Adrenal gland (tissue), 19 donors: ENCODE measurements at regions of chr3 and their contacts with region 1.

Region 1: DNA sequence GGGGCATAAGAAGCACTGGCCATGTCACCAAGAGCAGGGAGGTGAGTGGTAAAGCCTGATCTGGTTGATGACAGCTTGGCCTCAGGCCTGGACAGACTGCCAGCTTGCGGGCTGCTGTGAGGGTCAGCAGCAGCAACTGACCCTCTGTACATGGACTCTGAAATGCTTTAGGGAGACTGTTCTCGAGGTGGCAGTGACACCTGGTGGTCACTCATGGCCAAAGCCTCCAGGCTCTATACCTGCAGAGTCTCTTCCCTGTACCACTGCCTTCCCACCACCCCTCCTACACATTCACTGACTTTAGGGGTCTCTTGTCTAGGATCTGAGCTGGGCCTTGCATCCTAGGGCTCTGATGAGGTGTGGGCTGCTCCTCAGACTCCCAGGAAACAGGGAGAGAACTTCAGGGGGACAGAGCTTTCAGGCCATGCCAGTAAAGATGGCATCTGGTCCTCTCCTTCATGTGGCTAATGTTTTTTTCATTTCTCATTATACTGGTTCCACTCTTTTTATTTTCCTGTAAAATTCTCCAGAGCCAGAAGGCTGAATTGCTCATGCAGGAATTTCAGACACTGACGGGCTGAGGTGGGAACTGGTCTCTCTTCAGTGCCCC is 17.2 kb upstream of the TIMP4 start:
- DNase-seq: peak; percentile 55 to 86 (median 65)
- H3K4me3 ChIP-seq: no peak overlapping the region
- H3K27ac ChIP-seq: no peak overlapping the region
- H3K4me1 ChIP-seq: peaks cover 0 to 6% of the 10 kb centered on the region in 2 donors
- H3K27me3 ChIP-seq: no peaks in the 10 kb centered on the region
- CTCF ChIP-seq: peak; percentile 68 to 88 (median 80)
- POLR2A ChIP-seq: no peak

Region 2: DNA sequence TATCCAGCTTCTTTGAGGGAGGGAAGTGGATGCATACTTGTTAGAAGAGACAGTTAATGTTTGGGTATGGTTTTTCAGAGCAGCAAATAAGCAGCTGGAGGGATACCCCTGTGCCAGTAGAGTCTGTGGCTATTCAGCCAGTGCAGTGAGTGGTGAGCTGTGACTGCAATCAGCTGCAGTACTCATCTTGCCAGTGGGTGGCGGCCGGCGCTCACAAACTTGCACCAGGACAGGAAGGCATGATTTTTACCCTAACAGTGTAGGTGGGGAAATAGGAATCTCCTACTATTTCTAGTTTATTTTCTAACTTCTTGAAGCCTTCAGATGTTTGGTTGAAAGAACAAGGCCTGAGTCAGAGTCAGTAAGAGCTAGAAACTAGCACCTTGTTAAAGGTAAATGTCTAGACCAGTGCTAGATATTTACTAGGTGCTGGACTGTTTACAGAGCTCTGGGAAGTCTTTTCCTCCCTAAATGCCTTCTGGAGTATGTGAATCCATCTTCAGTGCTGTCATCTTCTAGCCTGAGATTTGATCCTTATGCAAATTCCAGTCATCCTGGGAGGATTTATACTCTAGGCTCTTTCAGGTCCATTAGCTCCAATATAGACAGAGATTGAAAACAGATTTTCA is 40.8 kb before region 1 on chr3:
- intact Hi-C with region 1: loop called (anchors 5 kb)
- DNase-seq: peak; percentile 63 to 89 (median 79)
- H3K4me3 ChIP-seq: no peak overlapping the region
- H3K27ac ChIP-seq: no peak overlapping the region
- H3K4me1 ChIP-seq: no peaks in the 10 kb centered on the region
- H3K27me3 ChIP-seq: no peaks in the 10 kb centered on the region
- CTCF ChIP-seq: peak; percentile 79 to 95 (median 86)
- POLR2A ChIP-seq: no peak

Region 3: GRCh38 chr3:12143949-12144504 is 31.9 kb before region 1 on chr3:
- intact Hi-C with region 1: loop called (anchors 5 kb)
- DNase-seq: peak in 6 of 7 donors; percentile 20 to 81 (median 53)
- H3K4me3 ChIP-seq: no peak overlapping the region
- H3K27ac ChIP-seq: peak overlapping the region in 3 of 5 donors; percentile 51 to 79 (median 63)
- H3K4me1 ChIP-seq: peaks cover 0 to 17% of the 10 kb centered on the region in 2 donors
- H3K27me3 ChIP-seq: peaks cover 4% of the 10 kb centered on the region
- CTCF ChIP-seq: no peak
- POLR2A ChIP-seq: no peak

Region 4: GRCh38 chr3:12750223-12750622 is 574.3 kb after region 1 on chr3:
- intact Hi-C with region 1: no loop called
- DNase-seq: peak; percentile 48 to 79 (median 72)
- H3K4me3 ChIP-seq: no peak overlapping the region
- H3K27ac ChIP-seq: no peak overlapping the region
- H3K4me1 ChIP-seq: peaks cover 0 to 8% of the 10 kb centered on the region in 2 donors
- H3K27me3 ChIP-seq: no peaks in the 10 kb centered on the region
- CTCF ChIP-seq: no peak
- POLR2A ChIP-seq: no peak